Activated naive CD4-positive, alpha-beta T cell treated with anti-CD3 and anti-CD28 coated beads for 36 hours (primary cell): ENCODE measurements at regions of chr4 and their contacts with region 1.

Region 1: DNA sequence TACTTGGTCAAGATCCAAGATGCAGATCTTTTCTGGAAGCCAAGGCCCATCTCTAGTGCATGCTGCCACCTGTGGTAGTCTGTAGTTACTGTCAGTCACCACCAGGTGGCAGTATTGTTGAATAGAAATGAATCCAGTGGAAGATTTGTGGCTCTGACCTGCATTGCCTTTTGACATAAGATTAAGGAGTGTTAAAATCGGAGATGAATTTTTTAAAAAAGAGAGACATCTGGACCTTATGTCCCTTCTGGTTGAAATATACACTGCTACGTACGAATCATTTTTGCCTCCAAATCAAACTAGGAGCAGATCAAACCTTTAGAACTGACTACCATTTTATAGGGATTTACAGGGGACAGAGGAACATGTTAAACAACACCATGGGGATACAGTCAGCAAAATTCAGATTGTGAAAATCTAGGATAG is 46.9 kb upstream of the RHOH start:
- DNase-seq: peak; percentile 86
- H3K4me3 Mint-ChIP-seq: no peak overlapping the region
- H3K27ac Mint-ChIP-seq: peak overlapping the region; percentile 70
- H3K4me1 Mint-ChIP-seq: peaks cover 36% of the 10 kb centered on the region
- H3K27me3 Mint-ChIP-seq: no peaks in the 10 kb centered on the region

Region 2: DNA sequence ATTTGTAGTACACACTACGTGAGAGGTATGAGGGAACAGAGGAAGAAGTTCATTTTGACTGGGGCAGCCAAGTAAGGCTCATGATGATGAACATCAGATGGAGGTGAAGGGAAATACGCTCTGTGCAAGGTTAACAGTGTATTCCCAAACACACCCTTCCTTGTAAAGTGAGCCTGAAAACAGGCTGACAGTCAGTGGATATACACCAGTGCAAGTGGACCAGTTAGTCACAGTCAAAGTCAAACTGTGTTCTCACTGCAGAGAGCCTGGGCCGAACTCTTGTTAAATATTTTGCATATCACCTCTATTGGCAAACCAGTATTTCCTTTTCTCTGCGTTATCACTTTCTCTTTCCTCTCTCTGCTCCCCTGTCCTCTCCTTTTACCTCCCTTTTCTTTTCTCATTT is 23.5 kb after region 1 on chr4:
- CTCF ChIA-PET with region 1: interaction called, 3 read pairs
- intact Hi-C with region 1: loop called (anchors 2 kb)
- DNase-seq: peak; percentile 42
- H3K4me3 Mint-ChIP-seq: peak overlapping the region; percentile 59
- H3K27ac Mint-ChIP-seq: peak overlapping the region; percentile 59
- H3K4me1 Mint-ChIP-seq: peaks cover 35% of the 10 kb centered on the region
- H3K27me3 Mint-ChIP-seq: no peaks in the 10 kb centered on the region

Region 3: GRCh38 chr4:40193016-40193571 is 43.1 kb after region 1 on chr4:
- CTCF ChIA-PET with region 1: interaction called, 18 read pairs
- intact Hi-C with region 1: loop called (anchors 1 kb)
- DNase-seq: peak; percentile 52
- H3K4me3 Mint-ChIP-seq: peak overlapping the region; percentile 85
- H3K27ac Mint-ChIP-seq: peak overlapping the region; percentile 98
- H3K4me1 Mint-ChIP-seq: peaks cover 67% of the 10 kb centered on the region
- H3K27me3 Mint-ChIP-seq: no peaks in the 10 kb centered on the region

Region 4: DNA sequence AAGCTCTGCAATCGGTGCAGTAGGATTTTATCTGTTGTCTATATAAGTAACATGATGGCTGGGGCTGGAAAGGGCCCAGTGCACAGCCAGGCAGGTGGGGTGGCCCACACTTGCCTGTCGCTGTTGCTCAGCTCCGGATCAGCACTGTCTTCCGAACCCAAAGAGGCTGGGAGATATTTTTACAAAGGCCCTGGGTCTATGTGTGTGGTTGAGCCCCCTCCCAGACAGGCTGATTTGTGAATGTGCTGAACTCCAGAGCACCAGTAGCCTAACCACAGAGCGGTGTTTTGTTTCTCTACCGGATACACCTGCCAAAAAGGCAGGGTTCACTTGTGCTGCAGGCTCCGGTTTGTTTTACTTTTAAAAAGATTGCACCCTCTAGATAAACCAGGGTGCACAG is 151.6 kb after region 1 on chr4:
- CTCF ChIA-PET with region 1: interaction called, 12 read pairs
- intact Hi-C with region 1: loop called (anchors 1 kb)
- DNase-seq: peak; percentile 73
- H3K4me3 Mint-ChIP-seq: peak overlapping the region; percentile 57
- H3K27ac Mint-ChIP-seq: peak overlapping the region; percentile 88
- H3K4me1 Mint-ChIP-seq: peaks cover 84% of the 10 kb centered on the region
- H3K27me3 Mint-ChIP-seq: no peaks in the 10 kb centered on the region

Region 5: GRCh38 chr4:40325189-40326019 is 175.4 kb after region 1 on chr4:
- CTCF ChIA-PET with region 1: interaction called, 42 read pairs
- intact Hi-C with region 1: loop called (anchors 1 kb)
- DNase-seq: peak; percentile 82
- H3K4me3 Mint-ChIP-seq: no peak overlapping the region
- H3K27ac Mint-ChIP-seq: no peak overlapping the region
- H3K4me1 Mint-ChIP-seq: peaks cover 27% of the 10 kb centered on the region
- H3K27me3 Mint-ChIP-seq: no peaks in the 10 kb centered on the region